SK-N-SH (cell line): ENCODE measurements at regions of chr7 and their contacts with region 1.

Region 1: GRCh38 chr7:111763221-111763801 is 201.0 kb upstream of the IMMP2L start:
- DNase-seq: peak; percentile 75
- H3K4me3 ChIP-seq: no peak overlapping the region
- H3K27ac ChIP-seq: peak overlapping the region in 1 of 2 experiments; percentile 36; a peak in 1 of 4 replicates
- H3K4me1 ChIP-seq: peaks cover 0 to 3% of the 10 kb centered on the region in 2 experiments; a peak in 1 of 4 replicates
- H3K27me3 ChIP-seq: no peaks in the 10 kb centered on the region
- CTCF ChIP-seq: peak; percentile 99
- EP300 ChIP-seq: no peak
- RAD21 ChIP-seq: peak; percentile 82

Region 2: DNA sequence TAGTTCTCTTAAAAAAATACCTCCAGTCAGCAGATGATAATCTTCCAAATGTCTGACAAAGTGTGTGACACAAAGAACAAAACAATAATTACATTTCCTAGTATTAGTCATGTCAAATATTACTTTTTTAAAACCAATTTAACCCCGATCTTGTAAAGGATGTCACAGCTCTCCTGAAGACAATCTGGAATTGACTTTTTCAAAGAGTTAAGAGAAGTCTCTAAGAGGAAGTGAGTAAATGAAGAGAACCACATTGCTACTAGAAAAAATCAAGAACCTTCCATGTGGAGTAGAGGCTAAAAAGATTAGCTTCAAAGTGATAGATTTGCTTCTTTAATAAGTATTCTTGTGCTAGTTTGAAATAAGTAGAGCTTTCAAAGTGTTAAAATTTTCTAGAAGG is 17.2 kb after region 1 on chr7:
- CTCF ChIA-PET with region 1: interaction called, 16 read pairs
- POLR2A ChIA-PET with region 1: no interaction called
- DNase-seq: no peak
- H3K4me3 ChIP-seq: no peak overlapping the region
- H3K27ac ChIP-seq: no peak overlapping the region
- H3K4me1 ChIP-seq: no peaks in the 10 kb centered on the region
- H3K27me3 ChIP-seq: no peaks in the 10 kb centered on the region
- CTCF ChIP-seq: no peak
- EP300 ChIP-seq: no peak
- RAD21 ChIP-seq: no peak

Region 3: GRCh38 chr7:111835066-111835465 is 71.8 kb after region 1 on chr7:
- CTCF ChIA-PET with region 1: interaction called, 24 read pairs
- POLR2A ChIA-PET with region 1: no interaction called
- DNase-seq: peak; percentile 53
- H3K4me3 ChIP-seq: no peak overlapping the region; a peak in 1 of 4 replicates
- H3K27ac ChIP-seq: peak overlapping the region; percentile 90 to 93
- H3K4me1 ChIP-seq: peaks cover 22 to 29% of the 10 kb centered on the region in 2 experiments
- H3K27me3 ChIP-seq: no peaks in the 10 kb centered on the region
- CTCF ChIP-seq: no peak
- EP300 ChIP-seq: peak; percentile 78 to 91; a peak in 3 of 4 replicates
- RAD21 ChIP-seq: no peak

Region 4: DNA sequence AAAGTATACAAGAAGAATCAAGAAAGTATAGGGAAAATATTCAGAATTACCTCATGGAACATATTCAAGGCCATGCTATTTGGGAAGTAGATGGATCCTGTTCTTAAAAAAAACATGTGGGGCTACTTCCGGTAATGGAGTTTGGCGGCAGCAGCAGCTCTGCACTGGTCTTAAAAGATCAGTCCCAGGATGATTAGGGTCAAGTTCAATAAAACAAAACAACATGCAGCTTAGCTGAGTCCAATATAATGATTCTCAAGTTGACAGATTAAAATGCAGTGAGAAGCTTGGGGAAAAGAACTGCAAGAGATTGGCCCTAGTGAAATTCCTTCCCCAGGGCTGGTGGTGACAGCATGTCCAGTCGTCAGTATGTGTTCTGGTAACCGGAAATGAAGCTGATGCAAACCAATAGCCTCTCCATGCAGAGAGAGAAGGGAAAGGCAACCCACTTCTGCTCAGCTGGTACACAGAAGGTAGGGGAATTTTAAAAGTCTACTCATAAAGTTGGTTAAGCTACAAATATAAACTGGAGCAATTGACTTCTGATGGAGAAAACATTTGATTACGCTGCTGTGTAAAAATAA is 104.1 kb after region 1 on chr7:
- CTCF ChIA-PET with region 1: interaction called, 36 read pairs
- POLR2A ChIA-PET with region 1: no interaction called
- DNase-seq: no peak
- H3K4me3 ChIP-seq: no peak overlapping the region
- H3K27ac ChIP-seq: no peak overlapping the region
- H3K4me1 ChIP-seq: peaks cover 0 to 5% of the 10 kb centered on the region in 2 experiments; a peak in 2 of 4 replicates
- H3K27me3 ChIP-seq: no peaks in the 10 kb centered on the region
- CTCF ChIP-seq: no peak
- EP300 ChIP-seq: peak in 1 of 2 experiments; percentile 12; a peak in 1 of 4 replicates
- RAD21 ChIP-seq: no peak

Region 5: DNA sequence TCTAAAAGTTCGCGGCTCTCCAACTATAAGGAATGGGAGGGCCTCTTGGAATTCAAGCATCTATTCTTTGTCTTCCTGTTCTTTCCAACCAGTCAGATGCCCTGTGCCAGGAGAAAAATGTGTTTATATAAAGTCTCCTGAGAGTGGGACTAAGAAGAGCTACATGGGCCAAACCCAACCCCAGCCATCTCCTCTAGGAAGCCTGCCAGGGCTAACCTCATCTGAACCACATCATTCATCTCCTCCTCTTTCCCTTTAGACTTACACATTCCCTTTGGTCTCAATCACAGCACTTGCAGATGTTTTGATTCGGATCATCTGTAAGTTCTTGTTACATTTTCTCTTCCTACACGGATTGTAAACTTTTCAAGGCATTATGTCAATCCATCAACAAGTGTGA is 380.3 kb after region 1 on chr7:
- CTCF ChIA-PET with region 1: interaction called, 11 read pairs
- POLR2A ChIA-PET with region 1: no interaction called
- DNase-seq: no peak
- H3K4me3 ChIP-seq: no peak overlapping the region
- H3K27ac ChIP-seq: no peak overlapping the region
- H3K4me1 ChIP-seq: peaks cover 0 to 48% of the 10 kb centered on the region in 2 experiments; a peak in 2 of 4 replicates
- H3K27me3 ChIP-seq: no peaks in the 10 kb centered on the region
- CTCF ChIP-seq: no peak
- EP300 ChIP-seq: no peak
- RAD21 ChIP-seq: no peak

Region 6: DNA sequence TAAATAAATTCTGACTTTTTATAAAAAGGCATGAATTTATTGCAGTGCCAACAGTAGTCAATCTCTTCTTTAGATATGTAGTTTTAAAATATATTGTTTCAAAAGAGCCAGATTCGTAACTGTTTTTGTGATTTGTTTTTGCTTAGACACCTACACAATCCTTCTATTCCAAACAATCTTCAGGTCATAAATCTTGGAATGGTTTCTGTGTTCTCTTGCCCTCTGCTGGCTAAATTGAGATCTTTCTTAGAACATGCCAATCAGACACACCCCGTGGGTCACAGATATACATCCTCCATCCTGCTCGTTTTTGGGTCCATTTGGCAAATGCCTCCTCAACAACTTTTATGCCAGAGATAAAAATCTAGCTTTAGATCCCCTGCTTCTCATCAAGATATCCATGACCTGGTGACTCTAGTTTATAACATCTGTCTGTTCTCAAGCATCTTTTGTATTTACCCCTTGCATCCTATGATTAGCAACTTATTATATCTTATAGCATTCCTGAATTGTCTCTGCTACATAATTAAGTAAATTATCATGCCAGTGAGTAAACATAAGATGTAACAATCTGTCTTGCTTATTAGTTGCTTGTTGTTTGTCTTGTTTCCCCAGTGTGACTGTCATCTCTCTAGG is 651.7 kb after region 1 on chr7:
- CTCF ChIA-PET with region 1: interaction called, 51 read pairs
- POLR2A ChIA-PET with region 1: no interaction called
- DNase-seq: peak; percentile 57
- H3K4me3 ChIP-seq: no peak overlapping the region
- H3K27ac ChIP-seq: no peak overlapping the region
- H3K4me1 ChIP-seq: peaks cover 0 to 11% of the 10 kb centered on the region in 2 experiments; a peak in 2 of 4 replicates
- H3K27me3 ChIP-seq: no peaks in the 10 kb centered on the region
- CTCF ChIP-seq: peak; percentile 85
- EP300 ChIP-seq: no peak
- RAD21 ChIP-seq: peak; percentile 84